A673 (cell line): ENCODE measurements at regions of chr3 and their contacts with region 1.

Region 1: GRCh38 chr3:194344012-194344411 is 7.1 kb downstream of the CPN2 start:
- DNase-seq: peak; percentile 73
- H3K4me3 ChIP-seq: no peak overlapping the region
- H3K27ac ChIP-seq: no peak overlapping the region
- H3K4me1 ChIP-seq: no peaks in the 10 kb centered on the region
- H3K27me3 ChIP-seq: no peaks in the 10 kb centered on the region
- CTCF ChIP-seq: peak; percentile 95

Region 2: DNA sequence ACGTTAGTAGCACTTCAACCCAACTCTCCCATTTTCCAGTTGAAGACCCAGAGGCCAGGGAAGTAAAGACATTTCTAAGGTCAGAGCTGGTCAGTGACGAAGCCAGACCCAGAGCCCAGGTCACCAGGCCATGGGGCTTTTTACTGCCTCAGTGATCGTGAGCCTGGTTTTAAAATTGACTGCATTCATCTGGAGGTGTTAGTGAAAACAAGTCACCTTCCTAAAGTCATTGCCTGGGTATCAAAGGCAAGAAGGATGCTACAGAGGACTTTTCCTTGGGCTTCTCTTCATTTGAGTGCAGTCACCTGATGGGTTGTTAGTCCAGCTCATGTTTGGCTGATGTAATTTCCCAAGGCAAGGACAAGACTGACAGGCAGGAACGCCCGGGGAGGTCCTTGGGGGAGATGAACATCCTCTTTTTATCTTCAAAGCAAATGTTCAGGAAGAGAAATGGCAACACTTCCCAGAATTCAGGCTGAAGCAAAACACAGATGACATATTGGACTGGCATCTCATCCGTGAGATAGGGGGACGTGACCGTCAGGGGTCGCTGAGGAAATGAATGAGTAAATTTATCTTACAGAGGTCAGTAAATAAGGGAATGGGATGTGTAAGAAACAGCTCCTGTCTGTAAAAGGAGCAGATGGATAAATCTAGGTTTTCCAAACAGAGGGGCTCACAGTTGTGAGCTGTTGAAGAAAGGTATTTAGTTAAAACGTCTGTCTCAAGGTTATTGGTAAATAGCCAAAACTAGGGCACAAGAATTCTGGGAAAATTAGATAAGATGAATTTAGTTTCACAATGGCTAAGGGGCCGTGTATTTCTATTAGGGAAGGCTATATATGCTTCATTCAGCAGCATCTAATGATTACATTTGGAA is 549.8 kb before region 1 on chr3:
- CTCF ChIA-PET with region 1: no interaction called
- POLR2A ChIA-PET with region 1: no interaction called
- intact Hi-C with region 1: no loop called
- DNase-seq: no peak
- H3K4me3 ChIP-seq: no peak overlapping the region
- H3K27ac ChIP-seq: no peak overlapping the region
- H3K4me1 ChIP-seq: peaks cover under 1% of the 10 kb centered on the region
- H3K27me3 ChIP-seq: no peaks in the 10 kb centered on the region
- CTCF ChIP-seq: no peak

Region 3: GRCh38 chr3:193946945-193947344 is 397.1 kb before region 1 on chr3:
- CTCF ChIA-PET with region 1: no interaction called
- POLR2A ChIA-PET with region 1: no interaction called
- intact Hi-C with region 1: no loop called
- DNase-seq: no peak
- H3K4me3 ChIP-seq: no peak overlapping the region
- H3K27ac ChIP-seq: no peak overlapping the region
- H3K4me1 ChIP-seq: no peaks in the 10 kb centered on the region
- H3K27me3 ChIP-seq: no peaks in the 10 kb centered on the region
- CTCF ChIP-seq: no peak

Region 4: DNA sequence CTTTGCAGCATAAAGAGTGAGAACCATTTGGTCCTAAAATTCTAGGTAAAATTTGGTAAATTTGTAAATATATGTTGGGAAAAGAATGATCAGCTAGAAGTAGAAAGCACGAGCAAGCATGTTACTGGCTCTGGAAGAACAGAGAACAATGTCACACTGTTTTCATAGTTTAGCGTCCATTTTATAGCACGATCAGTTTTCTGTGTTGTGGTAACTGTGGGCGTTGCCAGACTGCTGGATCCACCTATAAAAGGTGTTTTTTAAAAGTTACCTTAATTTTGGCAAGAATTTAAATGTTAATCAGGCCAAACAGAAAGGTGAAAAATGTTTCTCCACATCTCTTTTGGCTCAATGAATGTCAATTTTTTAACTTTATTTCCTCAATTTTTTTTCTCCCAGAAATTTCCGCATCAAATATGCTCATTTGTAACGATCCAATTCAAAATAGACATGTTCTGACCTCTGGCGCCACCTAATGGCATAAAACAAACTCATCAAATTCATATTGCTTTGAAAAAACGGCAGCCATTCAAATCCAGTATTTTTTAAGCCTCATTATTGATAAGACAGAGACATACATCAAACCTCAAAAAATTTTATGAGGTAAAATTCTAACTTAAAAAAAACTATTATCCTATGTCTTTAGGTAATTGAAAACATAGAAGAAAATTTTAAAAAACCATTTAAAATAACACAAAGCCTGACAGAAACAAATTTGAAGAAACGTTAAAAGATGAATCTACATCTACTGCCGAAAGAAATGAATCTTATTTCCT is 60.5 kb after region 1 on chr3:
- CTCF ChIA-PET with region 1: no interaction called
- POLR2A ChIA-PET with region 1: no interaction called
- intact Hi-C with region 1: loop called (anchors 2 kb)
- DNase-seq: peak; percentile 79
- H3K4me3 ChIP-seq: no peak overlapping the region
- H3K27ac ChIP-seq: no peak overlapping the region
- H3K4me1 ChIP-seq: peaks cover 3% of the 10 kb centered on the region
- H3K27me3 ChIP-seq: no peaks in the 10 kb centered on the region
- CTCF ChIP-seq: peak; percentile 85

Region 5: GRCh38 chr3:194508491-194509453 is 164.8 kb after region 1 on chr3:
- CTCF ChIA-PET with region 1: interaction called, 16 read pairs
- POLR2A ChIA-PET with region 1: no interaction called
- intact Hi-C with region 1: no loop called
- DNase-seq: peak; percentile 32
- H3K4me3 ChIP-seq: no peak overlapping the region
- H3K27ac ChIP-seq: peak overlapping the region; percentile 54
- H3K4me1 ChIP-seq: peaks cover 20% of the 10 kb centered on the region
- H3K27me3 ChIP-seq: no peaks in the 10 kb centered on the region
- CTCF ChIP-seq: no peak

Region 6: GRCh38 chr3:194556086-194557056 is 212.4 kb after region 1 on chr3:
- CTCF ChIA-PET with region 1: no interaction called
- POLR2A ChIA-PET with region 1: no interaction called
- intact Hi-C with region 1: no loop called
- DNase-seq: no peak
- H3K4me3 ChIP-seq: no peak overlapping the region
- H3K27ac ChIP-seq: no peak overlapping the region
- H3K4me1 ChIP-seq: peaks cover 2% of the 10 kb centered on the region
- H3K27me3 ChIP-seq: no peaks in the 10 kb centered on the region
- CTCF ChIP-seq: no peak

Region 7: GRCh38 chr3:194647747-194648146 is 303.7 kb after region 1 on chr3:
- CTCF ChIA-PET with region 1: no interaction called
- POLR2A ChIA-PET with region 1: no interaction called
- intact Hi-C with region 1: no loop called
- DNase-seq: no peak
- H3K4me3 ChIP-seq: no peak overlapping the region
- H3K27ac ChIP-seq: no peak overlapping the region
- H3K4me1 ChIP-seq: no peaks in the 10 kb centered on the region
- H3K27me3 ChIP-seq: no peaks in the 10 kb centered on the region
- CTCF ChIP-seq: no peak